Tibial artery (tissue), 4 donors: ENCODE measurements at regions of chr3 and their contacts with region 1.

Region 1: GRCh38 chr3:115685097-115685496 is 61.8 kb downstream of the GAP43 start:
- DNase-seq: no peak
- H3K4me3 ChIP-seq: no peak overlapping the region
- H3K27ac ChIP-seq: no peak overlapping the region
- H3K4me1 ChIP-seq: peaks cover 0 to 11% (median 5%) of the 10 kb centered on the region in 4 donors
- H3K27me3 ChIP-seq: no peaks in the 10 kb centered on the region
- CTCF ChIP-seq: no peak

Region 2: GRCh38 chr3:115623044-115623868 is 61.8 kb before region 1 on chr3 and contains the start of gene GAP43:
- intact Hi-C with region 1: loop called (anchors 10 kb)
- DNase-seq: peak; percentile 23 to 63
- H3K4me3 ChIP-seq: peak within 1 kb of the TSS; percentile 31 to 40
- H3K27ac ChIP-seq: no peak within 1 kb of the TSS
- H3K4me1 ChIP-seq: peaks cover 0 to 22% (median 9%) of the 10 kb centered on the region in 4 donors
- H3K27me3 ChIP-seq: peaks cover 0 to 16% of the 10 kb centered on the region in 2 donors
- CTCF ChIP-seq: no peak

Region 3: GRCh38 chr3:115713284-115713683 is 28.2 kb after region 1 on chr3:
- intact Hi-C with region 1: no loop called
- DNase-seq: no peak
- H3K4me3 ChIP-seq: no peak overlapping the region
- H3K27ac ChIP-seq: no peak overlapping the region
- H3K4me1 ChIP-seq: peaks cover 0 to 10% (median 0%) of the 10 kb centered on the region in 4 donors
- H3K27me3 ChIP-seq: no peaks in the 10 kb centered on the region
- CTCF ChIP-seq: no peak